ENCODE measurements at regions of chr21 and their contacts with region 1.

Region 1: GRCh38 chr21:26842976-26843932 is 2.0 kb downstream of the ADAMTS1 start:
- DNase-seq: peak in 1 of 2 donors; percentile 98
- H3K4me3 ChIP-seq: peak overlapping the region; percentile 69 to 86
- H3K27ac ChIP-seq: peak overlapping the region; percentile 97
- H3K4me1 ChIP-seq: peaks cover 39% of the 10 kb centered on the region
- H3K27me3 ChIP-seq: no peaks in the 10 kb centered on the region
- CTCF ChIP-seq: peak in 2 of 3 experiments; percentile 9 to 27
- POLR2A ChIP-seq: peak in 1 of 2 donors; percentile 47

Region 2: GRCh38 chr21:26583769-26584168 is 259.5 kb before region 1 on chr21:
- intact Hi-C with region 1: no loop called
- DNase-seq: no peak
- H3K4me3 ChIP-seq: no peak overlapping the region
- H3K27ac ChIP-seq: no peak overlapping the region
- H3K4me1 ChIP-seq: no peaks in the 10 kb centered on the region
- H3K27me3 ChIP-seq: no peaks in the 10 kb centered on the region
- CTCF ChIP-seq: no peak
- POLR2A ChIP-seq: no peak

Region 3: GRCh38 chr21:26769613-26770188 is 73.6 kb before region 1 on chr21:
- intact Hi-C with region 1: loop called (anchors 5 kb)
- DNase-seq: no peak
- H3K4me3 ChIP-seq: no peak overlapping the region
- H3K27ac ChIP-seq: no peak overlapping the region
- H3K4me1 ChIP-seq: no peaks in the 10 kb centered on the region
- H3K27me3 ChIP-seq: no peaks in the 10 kb centered on the region
- CTCF ChIP-seq: peak; percentile 27 to 68 (median 62)
- POLR2A ChIP-seq: no peak

Region 4: DNA sequence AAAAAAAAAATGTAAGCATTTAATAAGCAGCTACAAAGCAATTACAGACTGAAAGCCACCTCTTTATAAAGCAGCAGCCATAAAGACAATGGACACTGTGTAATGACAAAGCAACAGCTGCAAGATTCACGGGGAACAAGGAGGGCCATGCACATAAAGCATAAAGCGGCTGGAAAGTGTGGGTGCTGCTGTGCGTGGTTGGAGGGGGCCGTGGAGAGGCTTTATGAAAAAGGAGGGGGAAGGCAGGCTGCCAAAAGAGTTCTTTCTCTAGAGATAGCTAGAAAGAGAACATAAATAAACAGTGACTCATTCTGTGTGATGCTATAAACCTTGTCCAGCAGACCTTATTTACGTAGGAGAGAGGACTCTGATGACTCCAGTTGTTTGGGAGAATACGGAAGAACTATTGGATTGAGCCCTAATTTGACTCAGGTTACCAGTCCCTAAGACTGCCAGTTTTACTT is 47.4 kb before region 1 on chr21:
- intact Hi-C with region 1: loop called (anchors 5 kb)
- DNase-seq: no peak
- H3K4me3 ChIP-seq: no peak overlapping the region
- H3K27ac ChIP-seq: peak overlapping the region; percentile 73
- H3K4me1 ChIP-seq: peaks cover 17% of the 10 kb centered on the region
- H3K27me3 ChIP-seq: no peaks in the 10 kb centered on the region
- CTCF ChIP-seq: no peak
- POLR2A ChIP-seq: no peak

Region 5: GRCh38 chr21:28522014-28522799 is 1679.0 kb after region 1 on chr21:
- intact Hi-C with region 1: loop called (anchors 5 kb)
- DNase-seq: no peak
- H3K4me3 ChIP-seq: no peak overlapping the region
- H3K27ac ChIP-seq: no peak overlapping the region
- H3K4me1 ChIP-seq: peaks cover 12% of the 10 kb centered on the region
- H3K27me3 ChIP-seq: no peaks in the 10 kb centered on the region
- CTCF ChIP-seq: no peak
- POLR2A ChIP-seq: no peak

Region 6: DNA sequence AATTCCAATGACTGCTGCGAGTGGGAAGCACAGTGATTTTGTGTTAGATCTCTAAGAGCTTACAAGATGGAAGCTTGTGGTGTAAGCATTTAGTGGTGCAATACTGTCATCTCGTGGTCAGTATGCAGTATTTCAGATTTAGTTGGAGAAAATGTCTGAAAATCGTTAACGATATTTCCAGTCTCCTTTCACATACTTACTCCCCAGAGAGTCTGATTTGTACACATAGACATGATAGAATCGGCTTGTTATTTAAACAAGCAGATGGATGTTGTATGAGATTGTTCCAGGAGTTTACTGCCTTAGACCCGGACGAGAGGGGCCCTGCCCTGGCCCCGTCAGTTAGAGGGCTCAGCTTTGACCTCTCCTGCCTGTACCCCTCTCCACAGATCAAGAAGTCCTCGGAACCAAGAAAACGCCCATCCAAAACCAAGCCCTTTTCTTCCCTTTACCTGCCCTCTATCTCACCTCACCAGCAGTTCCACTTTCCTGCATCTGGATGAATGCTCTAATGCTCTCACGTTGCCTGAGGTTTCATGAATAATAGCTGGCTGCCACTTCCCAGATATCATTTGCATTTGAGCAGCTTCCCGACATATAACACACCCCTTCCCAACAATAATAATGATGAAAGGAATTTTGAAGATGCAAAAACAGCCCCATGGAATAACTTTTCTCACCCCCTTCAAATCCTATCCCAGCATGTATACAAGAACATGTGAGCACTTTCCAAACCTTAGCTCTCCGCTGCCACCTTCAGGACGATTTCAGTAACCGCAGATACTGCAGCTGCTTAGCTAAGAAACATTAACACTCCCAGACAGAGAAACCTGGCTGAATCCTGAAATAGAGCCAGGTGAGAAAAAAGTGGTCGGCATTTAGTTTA is 1902.1 kb after region 1 on chr21:
- intact Hi-C with region 1: loop called (anchors 5 kb)
- DNase-seq: no peak
- H3K4me3 ChIP-seq: peak overlapping the region; percentile 43 to 46
- H3K27ac ChIP-seq: peak overlapping the region; percentile 87
- H3K4me1 ChIP-seq: peaks cover 5% of the 10 kb centered on the region
- H3K27me3 ChIP-seq: no peaks in the 10 kb centered on the region
- CTCF ChIP-seq: peak; percentile 86 to 99 (median 89)
- POLR2A ChIP-seq: no peak

Measured in vagina (tissue), 2 donors.